Psoas muscle (tissue), 8 donors: ENCODE measurements at regions of chr4 and their contacts with region 1.

Region 1: DNA sequence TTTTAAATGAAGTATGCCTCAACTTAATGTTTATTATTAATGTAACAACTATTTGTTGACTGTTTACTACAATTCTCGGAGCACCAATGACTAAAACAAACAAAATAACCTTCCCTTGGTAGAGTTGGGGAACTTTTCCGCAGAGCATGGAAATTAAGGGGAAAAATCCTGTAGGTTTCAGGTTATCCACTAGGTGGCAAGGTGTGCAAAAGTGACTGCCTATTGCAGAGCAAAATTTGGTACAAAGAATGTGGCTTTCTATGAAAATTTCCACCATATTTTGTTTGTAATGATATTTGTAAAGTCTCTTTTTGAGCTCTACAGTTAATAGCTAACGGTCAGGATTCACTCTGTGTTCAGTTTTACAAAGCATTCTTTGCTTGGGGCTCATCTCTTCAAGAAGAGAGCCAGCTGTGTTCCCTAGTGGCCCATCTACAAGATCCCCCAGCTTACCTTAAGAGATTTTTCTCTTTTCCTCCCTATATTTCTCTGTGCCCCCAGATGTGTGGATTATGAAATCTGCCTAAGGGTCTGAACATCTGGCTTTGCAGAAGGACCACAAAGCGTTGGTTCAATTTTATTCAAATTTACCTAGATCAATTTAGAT is 61.1 kb downstream of the FBXO8 start:
- DNase-seq: no peak
- ATAC-seq: peak in 1 of 4 donors; percentile 64
- H3K4me3 ChIP-seq: no peak overlapping the region
- H3K27ac ChIP-seq: no peak overlapping the region
- H3K4me1 ChIP-seq: peaks cover 8% of the 10 kb centered on the region
- H3K27me3 ChIP-seq: peaks cover 0 to 19% (median 6%) of the 10 kb centered on the region in 3 donors
- CTCF ChIP-seq: peak; percentile 59

Region 2: DNA sequence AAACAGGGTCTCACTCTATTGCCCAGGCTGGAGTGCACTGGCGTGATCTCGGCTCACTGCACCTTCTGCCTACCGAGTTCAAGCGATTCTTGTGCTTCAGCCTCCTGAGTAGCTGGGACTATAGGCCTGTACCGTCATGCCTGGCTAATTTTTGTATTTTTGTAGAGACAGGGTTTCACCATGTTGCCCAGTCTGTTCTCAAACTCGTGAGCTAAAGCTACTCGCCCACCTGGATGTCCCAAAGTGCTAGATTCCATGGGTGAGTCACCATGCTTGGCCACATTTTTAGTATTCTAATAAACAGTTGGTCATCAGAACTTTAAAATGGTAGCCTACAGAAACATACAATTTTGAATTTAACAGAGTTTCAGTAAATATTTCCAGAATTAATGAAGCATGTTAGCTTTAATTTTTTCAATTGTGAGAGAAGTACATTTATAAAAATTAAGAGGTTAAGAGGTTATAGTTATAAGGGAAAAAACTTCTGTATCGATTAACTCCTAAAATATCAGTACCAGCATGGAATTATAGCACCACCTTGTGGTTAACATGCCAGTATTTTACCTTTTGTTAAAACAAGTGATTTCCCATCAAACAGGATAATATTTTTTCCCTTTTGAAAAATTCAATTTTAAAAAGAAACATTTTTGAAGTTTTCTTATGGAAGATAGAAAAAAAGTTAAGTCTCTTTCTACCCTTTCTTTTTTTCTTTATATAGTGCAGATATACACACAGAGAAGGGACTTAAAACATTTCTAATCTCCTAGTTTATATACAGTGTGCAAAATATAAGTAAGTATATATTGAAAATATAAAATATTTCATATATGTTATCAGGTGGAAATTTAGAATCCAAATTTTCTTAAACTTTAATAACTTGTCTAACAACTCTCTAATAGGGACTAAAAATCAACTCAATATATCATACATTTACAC is 96.7 kb after region 1 on chr4:
- intact Hi-C with region 1: loop called (anchors 5 to 10 kb)
- DNase-seq: no peak
- ATAC-seq: no peak
- H3K4me3 ChIP-seq: no peak overlapping the region
- H3K27ac ChIP-seq: no peak overlapping the region
- H3K4me1 ChIP-seq: no peaks in the 10 kb centered on the region
- H3K27me3 ChIP-seq: no peaks in the 10 kb centered on the region
- CTCF ChIP-seq: peak; percentile 74

Region 3: DNA sequence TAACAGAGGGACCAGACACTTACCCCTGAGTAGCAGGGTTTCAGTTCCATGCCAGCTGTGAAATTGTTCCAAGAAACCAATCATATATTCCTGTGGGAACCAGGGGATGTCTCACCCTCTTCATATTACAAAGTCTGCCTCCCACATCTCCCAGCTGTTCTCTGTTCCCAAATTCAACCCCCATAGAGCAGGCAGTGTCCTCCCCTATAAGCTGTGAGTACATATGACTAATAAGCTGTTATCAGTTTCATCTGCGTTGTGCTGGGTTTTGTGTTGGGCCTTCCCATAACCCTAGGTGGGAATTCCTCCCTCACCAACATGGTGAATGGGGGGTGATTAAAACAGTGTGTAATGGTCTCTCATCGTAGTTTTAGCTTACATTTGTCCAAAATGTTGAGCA is 102.4 kb after region 1 on chr4:
- intact Hi-C with region 1: loop called (anchors 5 to 10 kb)
- DNase-seq: no peak
- ATAC-seq: no peak
- H3K4me3 ChIP-seq: no peak overlapping the region
- H3K27ac ChIP-seq: no peak overlapping the region
- H3K4me1 ChIP-seq: no peaks in the 10 kb centered on the region
- H3K27me3 ChIP-seq: no peaks in the 10 kb centered on the region
- CTCF ChIP-seq: no peak